ENCODE measurements at regions of chr2 and their contacts with region 1.

Region 1: DNA sequence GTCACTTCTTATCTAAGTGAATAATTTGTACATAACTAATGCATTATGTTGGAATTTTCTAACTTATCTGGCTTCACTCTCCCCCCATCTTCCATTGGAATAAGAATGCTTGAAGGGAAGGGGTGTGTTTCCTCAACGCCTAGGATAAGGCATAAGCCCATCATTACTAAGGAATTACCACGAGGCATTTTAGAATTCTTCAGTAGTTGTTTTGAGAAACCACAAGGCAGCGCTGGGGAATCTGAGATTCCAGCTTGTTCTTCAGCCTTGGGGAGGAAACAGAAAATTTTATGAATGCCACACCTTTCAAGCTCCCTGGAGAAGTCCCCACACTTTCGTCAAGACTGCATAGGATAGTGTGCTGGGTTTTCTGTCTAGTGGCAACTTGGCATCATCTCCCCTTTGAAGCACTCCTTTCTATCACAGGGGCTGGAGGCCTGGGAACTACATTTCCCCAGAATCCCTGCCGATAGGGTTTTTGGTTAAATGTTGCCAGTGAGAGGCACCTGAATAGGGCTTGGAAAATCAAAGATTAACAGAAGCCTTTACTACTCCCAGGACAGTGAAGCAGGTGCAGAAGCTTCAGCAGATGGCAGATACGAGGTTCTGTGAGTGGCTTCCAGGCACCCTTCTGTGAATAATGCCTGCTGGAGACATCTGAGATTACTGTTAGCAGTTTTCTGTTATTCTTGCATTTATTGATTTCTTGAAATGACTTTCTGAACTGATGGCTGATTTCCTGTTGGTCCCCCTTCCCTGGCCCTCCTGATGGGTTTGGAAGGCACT is 192.7 kb upstream of the REV1 start:
- DNase-seq: no peak

Region 2: DNA sequence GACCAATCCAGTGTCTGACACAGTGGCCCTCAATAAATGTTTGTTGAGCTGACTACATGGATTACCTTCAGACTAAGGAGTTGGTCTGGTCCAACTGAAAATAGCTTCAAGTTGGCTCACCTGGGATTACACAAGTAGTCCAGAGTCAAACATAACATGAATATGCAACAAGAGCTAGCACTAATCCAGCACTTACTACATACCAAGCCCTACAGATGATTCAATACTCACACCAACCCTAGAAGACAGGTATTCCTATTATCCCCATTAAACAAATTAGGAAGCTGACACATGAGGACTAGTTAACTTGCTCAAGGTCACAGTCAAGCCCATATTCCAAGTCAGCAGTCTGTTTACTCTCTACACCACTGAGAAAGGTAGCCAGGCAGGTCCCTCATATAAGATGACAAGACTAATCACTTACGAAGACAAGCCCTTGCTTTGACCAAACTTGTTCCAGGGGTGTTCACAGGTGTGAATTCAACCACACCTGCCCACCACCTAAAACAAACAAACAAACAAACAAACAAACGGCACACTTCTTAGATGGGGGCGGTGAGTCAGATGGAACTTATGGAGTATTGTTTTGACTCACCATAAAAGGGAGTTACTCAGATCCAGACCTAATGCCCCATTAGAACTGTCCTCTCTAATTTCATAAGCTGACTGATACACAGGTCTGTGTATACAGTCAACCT is 1715.8 kb before region 1 on chr2:
- intact Hi-C with region 1: loop called in 1 of 2 experiments (anchors 5 kb)
- DNase-seq: no peak

Measured in posterior vena cava (tissue), 2 donors.